ENCODE measurements at regions of chr3 and their contacts with region 1.

Region 1: GRCh38 chr3:157493627-157494550 is 9.3 kb downstream of the VEPH1 start:
- DNase-seq: no peak
- H3K4me3 ChIP-seq: no peak overlapping the region
- CTCF ChIP-seq: peak; percentile 45

Region 2: DNA sequence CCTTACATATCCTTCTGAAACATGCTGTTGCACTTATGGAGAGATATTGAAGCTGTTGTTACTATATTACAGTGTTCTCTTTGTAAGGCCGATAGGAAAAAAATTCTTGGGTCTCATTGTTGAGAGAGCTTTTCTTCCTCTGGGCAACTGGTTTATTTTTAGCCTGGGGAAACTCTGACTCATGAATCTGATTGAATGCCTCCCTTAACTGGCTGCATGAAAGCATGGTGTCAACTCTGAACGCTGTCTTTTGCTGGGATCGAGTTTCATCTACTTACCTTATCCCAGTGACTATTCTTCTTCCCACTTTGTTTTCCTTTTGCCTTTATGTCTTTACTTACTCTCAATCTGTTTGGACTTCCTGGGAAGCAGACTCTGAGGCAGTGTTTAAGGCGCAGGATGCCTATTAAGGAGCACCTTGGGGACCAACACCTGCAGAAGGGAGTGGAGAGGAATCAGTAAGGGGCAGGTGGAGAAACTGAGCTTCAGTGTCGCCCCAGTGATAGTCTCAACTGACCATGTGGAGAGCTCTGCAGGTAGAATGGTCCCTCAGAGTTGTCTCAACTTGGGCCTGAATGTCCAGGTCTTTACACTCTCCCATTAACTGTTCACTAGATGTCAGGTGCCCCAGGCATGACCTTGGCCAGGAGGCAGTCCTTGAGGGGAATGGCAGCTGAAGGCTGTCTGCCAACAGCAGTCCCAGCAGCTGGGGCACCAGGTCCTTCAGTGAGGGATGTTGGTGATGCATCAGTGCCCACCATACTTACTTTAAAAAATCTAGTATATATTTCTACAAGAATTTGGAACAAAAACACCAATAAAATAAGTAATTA is 245.1 kb before region 1 on chr3:
- CTCF ChIA-PET with region 1: no interaction called
- POLR2A ChIA-PET with region 1: no interaction called
- DNase-seq: peak; percentile 51
- H3K4me3 ChIP-seq: no peak overlapping the region
- CTCF ChIP-seq: no peak

Region 3: GRCh38 chr3:157460253-157460652 is 33.6 kb before region 1 on chr3:
- CTCF ChIA-PET with region 1: interaction called, 17 read pairs
- POLR2A ChIA-PET with region 1: no interaction called
- DNase-seq: no peak
- H3K4me3 ChIP-seq: no peak overlapping the region
- CTCF ChIP-seq: no peak

Region 4: GRCh38 chr3:157475921-157476414 is 17.9 kb before region 1 on chr3:
- CTCF ChIA-PET with region 1: interaction called, 13 read pairs
- POLR2A ChIA-PET with region 1: no interaction called
- DNase-seq: no peak
- H3K4me3 ChIP-seq: no peak overlapping the region
- CTCF ChIP-seq: no peak